GM10248 (cell line): ENCODE measurements at regions of chr10 and their contacts with region 1.

Region 1: DNA sequence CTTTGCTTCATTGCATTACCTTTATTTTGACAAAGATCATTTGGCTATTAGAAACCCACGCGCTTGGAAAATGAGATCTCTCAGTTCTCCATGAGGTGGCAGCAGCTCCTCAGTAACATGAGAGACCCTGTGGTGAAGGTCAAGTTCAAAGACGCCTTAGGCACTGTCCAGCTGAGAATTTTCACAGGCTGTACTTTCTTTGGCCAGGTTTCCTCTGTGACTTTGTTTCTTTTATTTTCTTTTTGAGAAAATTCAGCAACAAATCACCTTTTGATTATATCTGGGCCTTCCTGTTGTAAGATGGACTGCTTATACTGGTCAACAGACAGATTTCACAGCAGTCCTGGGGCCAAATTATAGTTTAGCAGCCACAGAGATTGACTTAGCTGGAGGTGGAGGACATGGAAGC is 54.5 kb downstream of the RAB18 start:
- DNase-seq: peak; percentile 59
- CTCF ChIP-seq: peak; percentile 69

Region 2: GRCh38 chr10:27658788-27659187 is 100.2 kb after region 1 on chr10:
- CTCF ChIA-PET with region 1: interaction called, 11 read pairs
- POLR2A ChIA-PET with region 1: no interaction called
- DNase-seq: no peak
- CTCF ChIP-seq: no peak